K562 (cell line): ENCODE measurements at regions of chr18 and their contacts with region 1.

Region 1: DNA sequence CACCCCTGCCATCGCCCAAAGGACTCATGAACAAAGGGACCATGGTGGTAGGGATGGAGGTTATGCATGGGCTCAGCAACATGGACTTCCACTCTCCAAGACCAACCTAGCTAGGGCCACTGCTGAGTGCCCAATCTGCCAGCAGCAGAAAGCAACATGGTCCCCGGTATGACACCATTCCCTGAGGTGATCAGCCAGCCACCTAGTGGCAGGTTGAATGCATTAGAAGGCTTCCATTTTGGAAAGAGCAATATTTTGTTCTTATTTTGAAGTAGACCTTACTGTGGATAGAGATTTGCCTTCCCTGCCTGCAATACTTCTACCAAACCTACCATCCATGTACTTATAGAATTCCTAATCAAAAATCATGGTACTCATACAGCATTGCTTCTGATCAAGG is 99.8 kb downstream of the METTL4 start:
- DNase-seq: peak; percentile 16 to 62 (median 30)
- ATAC-seq: peak; percentile 94
- H3K4me3 ChIP-seq: no peak overlapping the region
- H3K27ac ChIP-seq: no peak overlapping the region
- H3K4me1 ChIP-seq: no peaks in the 10 kb centered on the region
- H3K27me3 ChIP-seq: no peaks in the 10 kb centered on the region; a peak in 1 of 5 replicates
- CTCF ChIP-seq: peak; percentile 66 to 80 (median 75)
- EP300 ChIP-seq: no peak
- POLR2A ChIP-seq: no peak
- RAD21 ChIP-seq: peak; percentile 44 to 77

Region 2: DNA sequence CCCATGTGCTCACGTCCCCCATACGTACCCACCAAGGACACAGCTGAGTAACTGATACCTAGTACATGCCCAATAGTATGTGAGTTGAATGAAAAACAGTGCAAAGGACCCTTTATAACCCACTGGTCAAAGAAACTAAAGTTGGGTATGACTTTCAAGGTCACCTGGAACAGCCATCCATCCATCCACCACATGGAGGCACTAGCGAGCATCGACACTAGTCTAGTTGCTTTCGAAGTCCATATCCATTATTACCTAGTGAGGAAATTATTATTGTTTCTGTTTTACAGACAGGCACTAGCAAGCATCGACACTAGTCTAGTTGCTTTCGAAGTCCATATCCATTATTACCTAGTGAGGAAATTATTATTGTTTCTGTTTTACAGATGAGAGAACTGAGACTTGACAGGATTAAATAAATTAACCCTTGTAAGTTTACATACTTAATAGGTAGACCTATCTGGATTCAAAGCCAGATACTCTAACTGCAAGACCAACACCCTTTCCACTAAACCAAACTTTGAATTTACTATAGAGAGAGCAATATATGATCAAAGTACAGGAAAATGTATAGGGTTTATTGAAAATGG is 133.9 kb before region 1 on chr18:
- CTCF ChIA-PET with region 1: no interaction called
- POLR2A ChIA-PET with region 1: no interaction called
- in situ Hi-C with region 1: no loop called
- intact Hi-C with region 1: loop called (anchors 5 kb)
- DNase-seq: peak; percentile 30 to 60 (median 40)
- ATAC-seq: peak; percentile 72
- H3K4me3 ChIP-seq: no peak overlapping the region
- H3K27ac ChIP-seq: no peak overlapping the region; the same call in 1 of the 3 replicates
- H3K4me1 ChIP-seq: peaks cover 4 to 13% of the 10 kb centered on the region in 2 experiments; a peak in 2 of 5 replicates
- H3K27me3 ChIP-seq: no peaks in the 10 kb centered on the region
- CTCF ChIP-seq: peak; percentile 40 to 71 (median 41); a peak in 4 of 6 replicates
- EP300 ChIP-seq: no peak
- POLR2A ChIP-seq: no peak
- RAD21 ChIP-seq: peak; percentile 17 to 59; a peak in 3 of 4 replicates